ENCODE measurements at regions of chr12 and their contacts with region 1.

Region 1: GRCh38 chr12:21773263-21773741 is 1.2 kb downstream of the KCNJ8 start:
- DNase-seq: peak; percentile 57 to 80
- H3K4me3 ChIP-seq: peak overlapping the region; percentile 68 to 84
- H3K27ac ChIP-seq: peak overlapping the region; percentile 86 to 89
- H3K4me1 ChIP-seq: peaks cover 0 to 21% (median 2%) of the 10 kb centered on the region in 4 donors
- H3K27me3 ChIP-seq: no peaks in the 10 kb centered on the region
- CTCF ChIP-seq: peak; percentile 22 to 31

Region 2: GRCh38 chr12:20681334-20681733 is 1092.0 kb before region 1 on chr12:
- intact Hi-C with region 1: no loop called
- DNase-seq: no peak
- H3K4me3 ChIP-seq: no peak overlapping the region
- H3K27ac ChIP-seq: no peak overlapping the region
- H3K4me1 ChIP-seq: peaks cover 0 to 22% (median 0%) of the 10 kb centered on the region in 4 donors
- H3K27me3 ChIP-seq: no peaks in the 10 kb centered on the region
- CTCF ChIP-seq: no peak

Region 3: DNA sequence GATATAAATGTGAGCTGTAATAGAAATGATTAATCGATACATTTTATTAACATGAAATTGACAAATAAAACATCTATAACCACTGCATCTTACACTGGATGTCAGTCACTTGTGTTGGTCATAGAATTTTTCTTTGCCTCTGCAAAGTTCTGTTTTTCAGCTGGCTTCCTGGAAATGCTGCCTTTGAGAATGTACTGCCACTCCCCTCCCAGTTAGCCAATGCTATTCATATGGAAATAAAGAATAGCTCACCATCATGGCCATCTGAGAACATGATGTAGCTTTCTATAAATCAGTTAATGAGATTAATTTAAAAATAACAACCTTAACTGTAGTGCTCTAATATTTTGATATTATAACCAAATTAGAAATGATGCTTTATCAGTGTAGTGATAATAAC is 601.2 kb before region 1 on chr12:
- intact Hi-C with region 1: no loop called
- DNase-seq: no peak
- H3K4me3 ChIP-seq: no peak overlapping the region
- H3K27ac ChIP-seq: no peak overlapping the region
- H3K4me1 ChIP-seq: no peaks in the 10 kb centered on the region
- H3K27me3 ChIP-seq: no peaks in the 10 kb centered on the region
- CTCF ChIP-seq: no peak

Region 4: DNA sequence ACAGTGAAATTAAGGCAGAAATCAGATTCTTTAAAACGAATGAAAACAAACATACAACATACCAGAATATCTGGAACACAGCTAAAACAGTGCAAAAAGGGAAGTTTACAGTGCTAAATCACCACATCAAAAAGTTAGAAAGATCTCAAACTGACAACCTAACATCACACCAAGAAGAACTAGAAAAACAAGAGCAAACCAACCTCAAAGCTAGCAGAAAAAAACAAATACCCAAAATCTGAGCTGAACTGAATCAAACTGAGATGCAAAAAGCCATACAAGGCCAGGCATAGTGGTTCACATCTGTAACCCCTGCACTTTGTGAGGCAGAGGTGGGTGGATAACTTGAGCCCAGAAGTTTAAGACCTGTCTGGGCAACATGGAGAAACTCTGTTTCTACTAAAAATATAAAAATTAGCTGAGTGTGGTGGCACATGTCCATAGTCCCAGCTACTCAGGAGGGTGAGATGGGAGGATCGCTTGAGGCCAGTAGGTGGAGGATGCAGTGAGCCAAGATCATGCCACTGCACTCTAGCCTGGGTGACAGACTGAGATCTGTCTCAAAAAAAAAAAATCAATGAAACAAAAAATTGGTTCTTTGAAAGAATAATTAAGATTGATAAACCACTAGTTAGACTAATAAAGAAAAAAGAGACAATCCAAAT is 82.5 kb before region 1 on chr12:
- intact Hi-C with region 1: no loop called
- DNase-seq: no peak
- H3K4me3 ChIP-seq: no peak overlapping the region
- H3K27ac ChIP-seq: no peak overlapping the region
- H3K4me1 ChIP-seq: peaks cover 0 to 6% (median 0%) of the 10 kb centered on the region in 4 donors
- H3K27me3 ChIP-seq: no peaks in the 10 kb centered on the region
- CTCF ChIP-seq: no peak

Region 5: DNA sequence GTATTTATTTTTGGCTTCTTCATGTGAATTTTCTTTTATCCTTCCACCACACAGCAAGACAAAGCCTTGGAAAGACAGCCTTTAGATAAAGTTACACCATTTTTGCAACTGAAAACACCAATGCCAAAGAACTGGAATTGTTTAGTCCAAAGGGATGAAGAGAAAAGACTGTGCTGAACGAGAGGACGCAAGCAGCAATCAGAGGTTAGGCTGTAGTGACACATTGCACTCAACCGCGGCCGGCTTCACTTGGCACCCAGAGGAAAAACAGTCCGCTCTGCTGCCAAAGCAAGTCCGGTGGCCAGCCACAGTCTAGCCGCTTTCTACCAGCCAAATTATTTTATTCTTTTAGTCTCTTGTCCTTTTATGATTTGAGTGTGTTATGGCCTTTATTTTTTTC is 50.3 kb after region 1 on chr12:
- intact Hi-C with region 1: loop called (anchors 5 kb)
- DNase-seq: peak; percentile 79 to 89
- H3K4me3 ChIP-seq: peak overlapping the region in 1 of 2 donors; percentile 18
- H3K27ac ChIP-seq: peak overlapping the region; percentile 39 to 53
- H3K4me1 ChIP-seq: peaks cover 0 to 53% (median 10%) of the 10 kb centered on the region in 4 donors
- H3K27me3 ChIP-seq: no peaks in the 10 kb centered on the region
- CTCF ChIP-seq: no peak

Region 6: DNA sequence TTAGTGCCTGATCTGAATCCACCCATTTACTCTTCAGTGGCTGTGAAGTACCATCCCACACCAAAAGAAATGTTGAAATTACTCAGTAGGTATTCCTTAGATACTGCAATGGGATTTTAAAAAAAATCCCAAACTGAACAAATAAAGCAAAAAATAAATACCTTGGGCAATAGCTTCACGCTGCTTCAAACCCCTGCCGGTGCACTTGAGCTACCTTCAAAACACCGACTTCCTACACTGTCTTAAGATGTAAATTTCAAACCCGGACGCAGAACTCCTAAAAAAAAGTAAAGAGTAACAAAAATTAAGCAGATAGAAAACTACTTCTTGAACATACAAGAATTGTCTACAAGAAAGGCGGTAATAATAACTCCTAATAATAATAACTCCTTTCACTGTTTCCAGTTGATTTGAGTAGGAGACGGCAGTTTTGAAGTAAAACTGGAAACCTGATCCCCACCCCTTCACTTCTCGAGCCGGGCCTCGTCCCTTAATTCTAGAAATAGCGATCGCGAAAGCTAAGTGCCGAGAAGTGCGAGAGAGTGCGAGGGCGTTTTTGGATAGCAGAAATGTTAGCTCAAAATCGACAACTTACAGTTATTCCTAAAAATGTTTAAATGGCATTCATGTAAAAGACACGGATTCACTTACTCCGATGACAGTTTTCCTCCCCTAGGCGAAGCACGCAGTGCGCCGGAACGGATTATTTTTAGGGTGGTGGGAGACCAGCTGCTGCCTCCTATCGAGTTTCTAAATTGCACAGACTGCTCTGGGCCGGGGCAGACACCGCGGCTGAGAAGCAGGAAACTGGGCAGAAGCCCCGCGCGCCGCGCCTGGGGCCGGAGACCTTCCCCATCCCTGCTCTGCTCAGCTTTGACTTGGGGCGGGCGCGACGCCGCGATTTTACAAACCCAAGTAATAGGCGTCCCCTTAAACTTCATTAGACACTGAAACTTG is 167.5 kb after region 1 on chr12 and contains the start of gene ABCC9:
- intact Hi-C with region 1: loop called (anchors 5 kb)
- DNase-seq: peak; percentile 60 to 74
- H3K4me3 ChIP-seq: peak within 1 kb of the TSS; percentile 57 to 70
- H3K27ac ChIP-seq: peak within 1 kb of the TSS; percentile 84 to 85
- H3K4me1 ChIP-seq: peaks cover 0 to 10% (median 3%) of the 10 kb centered on the region in 4 donors
- H3K27me3 ChIP-seq: no peaks in the 10 kb centered on the region
- CTCF ChIP-seq: no peak